ENCODE measurements at regions of chr2 and their contacts with region 1.

Region 1: GRCh38 chr2:27428213-27428977 is at the start of gene NRBP1:
- DNase-seq: peak; percentile 52
- ATAC-seq: peak; percentile 93
- H3K4me3 ChIP-seq: peak within 1 kb of the TSS; percentile 97
- H3K27ac ChIP-seq: peak within 1 kb of the TSS; percentile 85
- H3K4me1 ChIP-seq: no peaks in the 10 kb centered on the region
- H3K27me3 ChIP-seq: no peaks in the 10 kb centered on the region
- CTCF ChIP-seq: no peak
- EP300 ChIP-seq: no peak
- POLR2A ChIP-seq: peak; percentile 93
- RAD21 ChIP-seq: no peak
- polyA plus RNA-seq, gene NRBP1: 5.7 to 8.6 TPM

Region 2: DNA sequence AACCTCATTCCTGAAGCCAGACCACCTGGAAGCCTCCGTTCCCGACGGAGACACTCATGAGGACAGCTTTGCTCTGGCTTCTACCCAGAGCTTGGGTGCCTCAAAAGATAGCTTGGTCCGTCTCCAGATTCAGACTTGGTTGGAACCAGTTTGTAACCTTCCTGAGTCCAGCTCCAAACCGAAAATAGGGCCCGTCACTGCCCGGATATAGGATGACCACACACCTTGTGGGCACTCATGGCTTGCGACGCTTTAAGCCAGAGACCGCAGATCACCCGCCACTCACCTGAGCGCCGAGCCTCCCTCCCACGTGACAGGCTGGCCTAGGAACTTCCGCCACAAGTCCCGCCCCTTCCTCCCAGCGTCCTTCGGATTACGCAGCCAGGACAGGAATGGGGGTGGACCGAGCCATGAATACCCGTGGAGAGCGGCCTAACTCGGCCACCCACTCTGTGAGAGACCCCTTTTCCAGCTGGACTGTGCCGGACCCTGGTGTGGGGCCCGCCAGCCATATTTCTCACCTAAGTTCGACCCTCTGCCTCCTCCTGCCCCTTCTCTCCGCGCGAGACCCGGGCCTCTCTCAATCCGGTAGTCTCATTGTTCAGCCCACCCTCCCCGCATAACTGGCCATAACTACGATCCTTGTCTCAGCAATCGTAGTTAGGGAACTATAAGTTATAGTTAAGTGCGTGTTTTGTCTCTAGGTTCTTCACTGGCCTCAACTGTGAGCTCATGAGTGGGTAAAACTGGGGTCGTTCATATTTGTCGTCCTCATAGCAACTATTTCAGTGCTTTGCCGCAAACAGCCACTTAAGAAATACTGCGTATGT is 105.4 kb before region 1 on chr2 and contains the start of gene MPV17:
- CTCF ChIA-PET with region 1: interaction called, 4 read pairs
- POLR2A ChIA-PET with region 1: no interaction called
- RAD21 ChIA-PET with region 1: interaction called, 5 read pairs
- SMC1A ChIA-PET with region 1: interaction called, 17 read pairs
- in situ Hi-C with region 1: no loop called
- intact Hi-C with region 1: no loop called
- DNase-seq: peak; percentile 61
- ATAC-seq: peak; percentile 97
- H3K4me3 ChIP-seq: peak within 1 kb of the TSS; percentile 99
- H3K27ac ChIP-seq: peak within 1 kb of the TSS; percentile 95
- H3K4me1 ChIP-seq: peaks cover 6% of the 10 kb centered on the region
- H3K27me3 ChIP-seq: no peaks in the 10 kb centered on the region
- CTCF ChIP-seq: no peak
- EP300 ChIP-seq: 0 out of 4 replicates have a peak, but pooled peaks of 1 of the 2 experiments have one; percentile 12
- POLR2A ChIP-seq: peak; percentile 95
- RAD21 ChIP-seq: no peak
- polyA plus RNA-seq, gene MPV17: 67.6 to 69.8 TPM

Region 3: DNA sequence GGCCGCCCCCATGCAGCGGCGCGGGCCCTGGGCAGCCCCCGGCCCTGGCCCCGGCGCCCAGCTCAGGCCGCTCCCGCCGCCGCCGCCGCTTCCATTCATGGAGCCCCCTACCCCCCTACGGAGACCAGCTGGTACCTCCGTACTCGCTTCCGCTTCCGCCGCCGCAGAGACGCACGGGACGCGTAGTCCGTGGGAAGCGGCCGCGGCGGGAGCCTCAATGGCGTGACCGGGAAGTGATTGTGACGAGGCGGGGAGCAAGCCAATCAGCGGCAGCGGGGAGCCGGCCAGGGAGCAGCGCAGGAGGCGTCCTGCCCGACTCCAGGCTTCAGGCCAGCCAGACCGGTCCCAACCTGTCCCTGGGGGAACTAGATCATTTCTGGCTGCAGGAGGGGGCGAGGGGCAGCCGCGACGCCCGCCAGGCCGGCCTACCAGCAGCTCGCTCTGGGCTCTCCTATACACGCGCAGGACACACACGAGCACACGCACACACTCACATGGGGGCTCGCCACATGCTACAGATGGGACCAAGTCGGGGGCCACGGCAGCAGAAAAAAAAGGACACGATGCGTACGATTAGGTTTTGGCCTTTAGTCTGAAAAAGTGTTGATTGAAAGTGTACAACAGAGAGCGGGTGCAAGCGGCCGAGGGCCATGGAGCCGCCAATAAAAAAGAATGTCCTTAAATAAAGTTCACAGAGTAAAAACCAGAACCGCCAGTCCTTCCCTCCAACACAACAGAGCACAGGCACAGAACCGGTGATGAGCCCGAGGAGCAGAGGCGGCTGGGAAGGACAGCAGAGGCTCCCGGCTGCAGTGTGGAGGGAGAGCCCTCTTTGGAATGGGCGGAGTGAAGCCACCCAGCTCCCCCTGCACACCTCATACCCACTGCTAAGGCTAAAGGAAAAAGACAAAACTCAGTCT is 47.5 kb before region 1 on chr2 and contains the start of gene ZNF513:
- CTCF ChIA-PET with region 1: interaction called, 14 read pairs
- POLR2A ChIA-PET with region 1: interaction called, 19 read pairs
- RAD21 ChIA-PET with region 1: interaction called, 4 read pairs
- SMC1A ChIA-PET with region 1: interaction called, 3 read pairs
- in situ Hi-C with region 1: no loop called
- intact Hi-C with region 1: no loop called
- DNase-seq: peak; percentile 55
- ATAC-seq: peak; percentile 95
- H3K4me3 ChIP-seq: peak within 1 kb of the TSS; percentile 69
- H3K27ac ChIP-seq: peak within 1 kb of the TSS; percentile 96
- H3K4me1 ChIP-seq: peaks cover 9% of the 10 kb centered on the region; the same call in 1 of the 2 replicates
- H3K27me3 ChIP-seq: no peaks in the 10 kb centered on the region
- CTCF ChIP-seq: no peak
- EP300 ChIP-seq: no peak
- POLR2A ChIP-seq: peak; percentile 91
- RAD21 ChIP-seq: no peak
- polyA plus RNA-seq, gene ZNF513: 0.06 to 0.18 TPM

Region 4: GRCh38 chr2:27855476-27855875 is 427.1 kb after region 1 on chr2:
- CTCF ChIA-PET with region 1: no interaction called
- POLR2A ChIA-PET with region 1: no interaction called
- RAD21 ChIA-PET with region 1: no interaction called
- SMC1A ChIA-PET with region 1: no interaction called
- in situ Hi-C with region 1: no loop called
- intact Hi-C with region 1: no loop called
- DNase-seq: no peak
- ATAC-seq: no peak
- H3K4me3 ChIP-seq: no peak overlapping the region
- H3K27ac ChIP-seq: no peak overlapping the region
- H3K4me1 ChIP-seq: no peaks in the 10 kb centered on the region
- H3K27me3 ChIP-seq: no peaks in the 10 kb centered on the region
- CTCF ChIP-seq: no peak
- EP300 ChIP-seq: no peak
- POLR2A ChIP-seq: no peak
- RAD21 ChIP-seq: no peak